Mammary epithelial cell (primary cell): ENCODE measurements at regions of chr1 and their contacts with region 1.

Region 1: DNA sequence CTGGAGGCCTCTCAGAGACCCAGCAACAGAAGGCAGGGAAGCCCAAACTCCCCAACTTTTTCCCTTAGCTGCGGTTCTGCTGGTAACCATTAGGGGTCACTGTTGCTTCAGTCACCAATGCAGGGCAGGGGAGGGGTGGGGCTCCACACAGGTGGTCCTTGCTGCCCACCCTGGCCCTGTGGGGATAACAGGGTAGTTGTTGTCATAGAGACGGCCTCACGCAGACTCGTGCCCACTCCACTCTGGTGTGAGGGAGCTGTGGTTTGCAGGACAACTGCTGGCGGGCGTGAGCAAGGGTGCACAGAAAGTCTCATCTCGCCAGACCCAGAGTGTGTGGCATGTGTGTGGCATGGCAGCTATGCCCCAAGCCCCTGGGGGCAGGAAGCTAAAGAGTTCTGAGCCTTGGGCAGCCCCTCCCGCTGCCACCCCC is 19.9 kb downstream of the INSRR start:
- DNase-seq: no peak
- H3K4me3 ChIP-seq: no peak overlapping the region
- H3K27ac ChIP-seq: no peak overlapping the region
- H3K4me1 ChIP-seq: no peaks in the 10 kb centered on the region
- H3K27me3 ChIP-seq: no peaks in the 10 kb centered on the region
- CTCF ChIP-seq: peak; percentile 85 to 88

Region 2: GRCh38 chr1:156717275-156717805 is 121.7 kb before region 1 on chr1:
- CTCF ChIA-PET with region 1: interaction called, 10 read pairs
- dilution Hi-C with region 1: no loop called
- in situ Hi-C with region 1: no loop called
- intact Hi-C with region 1: no loop called
- DNase-seq: no peak
- H3K4me3 ChIP-seq: no peak overlapping the region
- H3K27ac ChIP-seq: no peak overlapping the region
- H3K4me1 ChIP-seq: peaks cover 3% of the 10 kb centered on the region
- H3K27me3 ChIP-seq: no peaks in the 10 kb centered on the region
- CTCF ChIP-seq: no peak

Region 3: DNA sequence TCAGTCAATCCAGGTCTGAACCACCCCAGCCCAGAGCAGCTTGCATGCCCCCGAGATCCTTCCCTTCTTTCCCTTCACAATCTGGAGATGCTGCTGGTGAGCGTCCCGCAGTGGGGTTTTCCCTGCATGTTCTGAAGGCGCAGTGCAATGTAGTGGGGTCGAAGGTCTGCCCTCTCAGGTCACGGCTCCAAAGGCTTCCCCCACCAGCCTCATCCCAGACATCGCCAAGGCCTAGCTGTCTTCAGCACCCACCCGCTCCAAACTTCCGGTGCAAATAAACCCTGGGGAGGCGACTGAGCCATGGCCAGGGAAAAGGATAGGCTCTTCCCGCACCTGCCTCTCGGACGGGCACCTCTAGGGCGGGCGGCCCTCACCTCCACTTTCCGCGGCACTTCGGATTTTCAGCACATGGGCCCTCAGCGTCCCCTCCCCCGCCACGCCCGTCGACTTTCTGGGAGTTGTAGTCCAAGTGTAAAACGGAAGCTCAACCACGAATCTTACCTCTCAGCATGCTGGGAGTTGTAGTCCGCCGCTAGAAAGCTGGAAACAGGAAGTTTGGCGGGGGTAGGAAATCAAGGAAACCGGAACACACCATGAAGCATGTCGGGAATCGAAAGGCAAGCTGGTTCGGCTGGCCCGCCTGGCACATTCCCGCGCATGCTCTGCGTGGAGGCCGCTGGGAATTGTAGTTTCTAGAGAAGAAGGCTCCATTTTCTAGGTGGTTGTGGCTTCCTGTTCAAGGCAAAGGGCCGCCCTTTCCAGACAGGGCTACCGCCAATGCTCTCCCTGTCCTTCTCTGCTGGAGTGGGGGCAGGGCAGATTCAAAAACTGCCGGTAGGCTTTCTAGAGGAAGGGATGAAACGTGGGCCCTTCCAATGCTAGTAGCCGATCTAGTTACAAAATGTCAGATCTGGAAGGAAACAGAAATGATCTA is 98.0 kb before region 1 on chr1 and contains the start of gene MRPL24:
- CTCF ChIA-PET with region 1: no interaction called
- dilution Hi-C with region 1: loop called (anchors 5 kb)
- in situ Hi-C with region 1: no loop called
- intact Hi-C with region 1: no loop called
- DNase-seq: peak; percentile 100
- H3K4me3 ChIP-seq: peak within 1 kb of the TSS; percentile 50 to 85 (median 73)
- H3K27ac ChIP-seq: peak within 1 kb of the TSS; percentile 37
- H3K4me1 ChIP-seq: peaks cover 13% of the 10 kb centered on the region
- H3K27me3 ChIP-seq: no peaks in the 10 kb centered on the region
- CTCF ChIP-seq: no peak
- total RNA-seq, gene MRPL24: 25.0 to 86.1 TPM

Region 4: DNA sequence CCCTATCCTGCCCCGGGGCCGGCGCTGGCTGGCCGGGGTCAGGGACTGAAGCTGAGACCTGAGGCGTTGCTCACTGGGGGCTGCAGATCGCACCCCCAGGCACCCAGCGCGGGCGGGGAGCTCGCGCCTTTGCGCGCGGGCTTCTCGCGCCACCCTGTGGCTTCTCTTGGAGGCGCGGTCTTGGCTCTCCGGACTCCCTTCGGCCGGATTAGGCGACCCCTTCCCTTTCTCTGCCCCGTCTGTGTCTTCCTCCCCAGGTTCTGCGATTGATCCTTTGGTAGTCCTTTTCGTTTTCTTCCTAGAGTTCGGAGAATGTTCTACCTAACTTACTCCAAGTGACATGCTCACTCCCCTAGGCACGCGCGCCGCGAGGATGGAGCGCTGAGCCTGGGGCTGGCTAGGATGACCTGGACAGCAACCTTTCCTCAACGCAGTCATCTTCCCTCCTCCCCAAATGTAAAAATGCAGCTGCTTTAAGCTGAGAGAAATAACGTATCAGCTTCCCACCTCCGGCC is 21.2 kb after region 1 on chr1:
- CTCF ChIA-PET with region 1: interaction called, 5 read pairs
- dilution Hi-C with region 1: no loop called
- in situ Hi-C with region 1: no loop called
- intact Hi-C with region 1: loop called (anchors 1 kb)
- DNase-seq: peak; percentile 49
- H3K4me3 ChIP-seq: peak overlapping the region; percentile 31 to 46 (median 38)
- H3K27ac ChIP-seq: no peak overlapping the region
- H3K4me1 ChIP-seq: peaks cover 10% of the 10 kb centered on the region
- H3K27me3 ChIP-seq: peaks cover 27% of the 10 kb centered on the region
- CTCF ChIP-seq: peak; percentile 57 to 83

Region 5: GRCh38 chr1:156927215-156928042 is 88.4 kb after region 1 on chr1:
- CTCF ChIA-PET with region 1: interaction called, 10 read pairs
- dilution Hi-C with region 1: no loop called
- in situ Hi-C with region 1: no loop called
- intact Hi-C with region 1: loop called (anchors 2 kb)
- DNase-seq: peak; percentile 72
- H3K4me3 ChIP-seq: peak overlapping the region in 2 of 3 experiments; percentile 36 to 49
- H3K27ac ChIP-seq: no peak overlapping the region
- H3K4me1 ChIP-seq: peaks cover 17% of the 10 kb centered on the region
- H3K27me3 ChIP-seq: peaks cover 33% of the 10 kb centered on the region
- CTCF ChIP-seq: peak; percentile 69 to 89

Region 6: GRCh38 chr1:156948708-156949107 is 109.7 kb after region 1 on chr1:
- CTCF ChIA-PET with region 1: no interaction called
- dilution Hi-C with region 1: loop called (anchors 5 kb)
- in situ Hi-C with region 1: no loop called
- intact Hi-C with region 1: no loop called
- DNase-seq: no peak
- H3K4me3 ChIP-seq: no peak overlapping the region
- H3K27ac ChIP-seq: no peak overlapping the region
- H3K4me1 ChIP-seq: no peaks in the 10 kb centered on the region
- H3K27me3 ChIP-seq: no peaks in the 10 kb centered on the region
- CTCF ChIP-seq: peak; percentile 1 to 19